CD14-positive monocyte (primary cell): ENCODE measurements at regions of chr17 and their contacts with region 1.

Region 1: GRCh38 chr17:64281962-64282727 is 19.1 kb upstream of the TEX2 start:
- DNase-seq: peak; percentile 64 to 75 (median 72)
- H3K4me3 ChIP-seq: peak overlapping the region in 1 of 3 experiments; percentile 62
- H3K4me3 Mint-ChIP-seq: peak overlapping the region in 1 of 2 donors; percentile 53
- H3K27ac ChIP-seq: peak overlapping the region in 1 of 2 donors; percentile 56
- H3K27ac Mint-ChIP-seq: peak overlapping the region in 3 of 7 donors; percentile 36 to 71 (median 68)
- H3K4me1 ChIP-seq: peaks cover 36 to 39% of the 10 kb centered on the region in 2 donors
- H3K4me1 Mint-ChIP-seq: peaks cover 46% of the 10 kb centered on the region
- H3K27me3 ChIP-seq: no peaks in the 10 kb centered on the region
- H3K27me3 Mint-ChIP-seq: no peaks in the 10 kb centered on the region
- CTCF ChIP-seq: peak; percentile 91

Region 2: DNA sequence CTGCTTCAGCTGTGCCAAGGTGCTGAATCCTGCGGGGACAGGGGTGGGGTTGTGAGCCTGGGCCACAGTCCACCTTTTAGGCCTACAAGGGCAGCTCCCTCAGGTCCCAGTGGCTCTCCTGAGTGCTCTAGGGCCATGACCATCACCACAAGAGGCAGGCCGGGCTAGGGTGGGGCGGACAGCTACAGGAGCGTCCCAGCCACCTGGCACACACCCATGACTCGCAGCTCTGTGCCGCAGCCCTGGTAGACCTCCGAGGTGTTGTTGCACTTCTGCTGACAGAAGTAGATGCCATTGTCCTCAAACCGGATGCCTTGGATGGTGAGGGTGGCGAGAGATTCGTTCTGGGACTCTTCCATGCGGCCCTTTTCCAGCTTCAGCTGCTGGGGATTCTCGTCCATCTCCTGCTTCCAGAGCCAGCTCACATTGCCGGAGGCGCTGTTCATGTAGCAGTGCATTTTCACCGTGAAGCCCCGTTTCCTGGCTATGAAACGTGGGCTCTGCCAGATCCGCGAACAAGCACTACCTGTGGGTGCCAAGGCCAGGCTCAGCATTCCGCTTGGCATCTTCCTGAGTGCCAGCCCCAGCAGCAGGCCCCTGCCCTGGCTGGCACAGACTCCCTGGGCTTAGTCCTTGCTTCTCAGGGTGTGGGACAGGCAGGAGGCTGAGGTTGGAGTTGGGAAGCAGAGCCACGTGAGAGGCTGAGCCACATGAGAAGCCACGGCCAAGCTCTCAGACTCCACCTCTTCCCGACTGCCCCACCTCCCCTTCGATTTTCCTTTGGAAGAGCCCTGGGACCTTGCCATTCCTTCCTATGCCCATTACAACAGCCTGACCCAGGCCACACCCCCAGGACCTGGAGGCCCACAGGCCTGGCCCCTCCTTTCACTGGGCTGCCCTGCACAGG is 352.0 kb before region 1 on chr17:
- intact Hi-C with region 1: loop called in 1 of 2 experiments (anchors 10 kb)
- DNase-seq: no peak
- H3K4me3 ChIP-seq: peak overlapping the region in 1 of 3 experiments; percentile 62
- H3K4me3 Mint-ChIP-seq: peak overlapping the region in 1 of 2 donors; percentile 73
- H3K27ac ChIP-seq: no peak overlapping the region
- H3K27ac Mint-ChIP-seq: no peak overlapping the region
- H3K4me1 ChIP-seq: peaks cover 30 to 34% of the 10 kb centered on the region in 2 donors
- H3K4me1 Mint-ChIP-seq: peaks cover 33% of the 10 kb centered on the region
- H3K27me3 ChIP-seq: no peaks in the 10 kb centered on the region
- H3K27me3 Mint-ChIP-seq: peaks cover 4 to 16% (median 6%) of the 10 kb centered on the region in 3 donors
- CTCF ChIP-seq: no peak

Region 3: GRCh38 chr17:64036198-64036922 is 245.8 kb before region 1 on chr17:
- intact Hi-C with region 1: loop called in 1 of 2 experiments (anchors 10 kb)
- DNase-seq: no peak
- H3K4me3 ChIP-seq: no peak overlapping the region
- H3K4me3 Mint-ChIP-seq: no peak overlapping the region
- H3K27ac ChIP-seq: no peak overlapping the region
- H3K27ac Mint-ChIP-seq: peak overlapping the region in 2 of 7 donors; percentile 11 to 61
- H3K4me1 ChIP-seq: no peaks in the 10 kb centered on the region
- H3K4me1 Mint-ChIP-seq: no peaks in the 10 kb centered on the region
- H3K27me3 ChIP-seq: no peaks in the 10 kb centered on the region
- H3K27me3 Mint-ChIP-seq: no peaks in the 10 kb centered on the region
- CTCF ChIP-seq: no peak

Region 4: GRCh38 chr17:64145757-64146417 is 136.3 kb before region 1 on chr17:
- intact Hi-C with region 1: loop called (anchors 5 kb)
- DNase-seq: peak; percentile 97 to 100 (median 98)
- H3K4me3 ChIP-seq: peak overlapping the region; percentile 72 to 95 (median 93)
- H3K4me3 Mint-ChIP-seq: no peak overlapping the region
- H3K27ac ChIP-seq: peak overlapping the region; percentile 66 to 85
- H3K27ac Mint-ChIP-seq: no peak overlapping the region
- H3K4me1 ChIP-seq: peaks cover 25 to 28% of the 10 kb centered on the region in 2 donors
- H3K4me1 Mint-ChIP-seq: peaks cover 24% of the 10 kb centered on the region
- H3K27me3 ChIP-seq: no peaks in the 10 kb centered on the region
- H3K27me3 Mint-ChIP-seq: no peaks in the 10 kb centered on the region
- CTCF ChIP-seq: no peak